ENCODE measurements at regions of chr10 and their contacts with region 1.

Region 1: GRCh38 chr10:124741281-124741921 is 2.8 kb downstream of the FAM53B start:
- DNase-seq: peak; percentile 64 to 88 (median 80)
- ATAC-seq: peak; percentile 55
- H3K4me3 ChIP-seq: peak overlapping the region; percentile 10 to 75
- H3K4me3 Mint-ChIP-seq: peak overlapping the region; percentile 97
- H3K27ac ChIP-seq: peak overlapping the region in 1 of 2 experiments; percentile 73
- H3K27ac Mint-ChIP-seq: peak overlapping the region; percentile 93
- H3K4me1 ChIP-seq: peaks cover 67% of the 10 kb centered on the region
- H3K4me1 Mint-ChIP-seq: peaks cover 75% of the 10 kb centered on the region
- H3K27me3 ChIP-seq: no peaks in the 10 kb centered on the region
- H3K27me3 Mint-ChIP-seq: no peaks in the 10 kb centered on the region
- CTCF ChIP-seq: peak; percentile 94

Region 2: DNA sequence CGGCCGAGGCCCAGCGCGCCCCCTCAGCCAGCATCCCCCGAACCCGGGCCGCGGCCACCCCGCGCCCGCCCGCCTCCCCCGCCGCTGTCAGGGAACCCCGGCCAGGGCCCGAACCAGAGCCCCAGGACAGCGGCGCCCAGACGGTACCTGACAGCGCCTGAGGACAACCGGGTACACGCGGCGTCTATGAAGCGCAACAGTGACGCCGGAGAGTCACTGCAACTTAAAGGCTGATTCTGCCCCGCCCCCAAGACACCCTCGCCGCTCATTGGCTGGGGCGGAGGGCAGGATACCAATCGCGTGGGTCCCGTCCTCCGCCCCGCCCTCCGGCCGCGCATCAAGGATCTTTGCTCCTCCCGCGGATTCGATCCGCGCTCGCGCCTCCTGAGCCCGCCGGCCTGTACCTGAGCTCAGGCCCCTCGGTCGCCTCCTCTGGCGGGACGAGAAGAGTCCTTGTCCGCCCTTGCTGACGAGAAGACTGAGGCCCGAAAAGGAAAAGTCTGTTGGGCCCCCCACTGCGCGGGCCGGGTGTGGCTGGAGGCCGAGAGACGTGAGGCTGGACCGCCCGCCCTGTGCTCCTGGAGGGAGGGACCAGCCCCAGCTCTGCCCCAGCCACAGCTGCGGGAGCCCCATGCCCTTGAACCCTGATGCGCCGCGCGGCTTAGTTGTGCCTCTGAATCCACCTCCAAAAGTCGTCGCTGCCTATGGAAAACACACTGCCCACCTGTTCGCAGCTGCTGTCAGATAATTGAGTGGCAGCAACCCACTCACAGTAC is 322.5 kb before region 1 on chr10 and contains the start of gene OAT:
- CTCF ChIA-PET with region 1: no interaction called
- POLR2A ChIA-PET with region 1: no interaction called
- intact Hi-C with region 1: loop called (anchors 1 to 5 kb)
- DNase-seq: peak; percentile 93 to 98 (median 97)
- ATAC-seq: peak; percentile 98
- H3K4me3 ChIP-seq: peak within 1 kb of the TSS; percentile 66 to 68
- H3K4me3 Mint-ChIP-seq: peak within 1 kb of the TSS; percentile 85
- H3K27ac ChIP-seq: peak within 1 kb of the TSS; percentile 70
- H3K27ac Mint-ChIP-seq: peak within 1 kb of the TSS; percentile 83
- H3K4me1 ChIP-seq: peaks cover 14% of the 10 kb centered on the region
- H3K4me1 Mint-ChIP-seq: peaks cover 25% of the 10 kb centered on the region
- H3K27me3 ChIP-seq: no peaks in the 10 kb centered on the region
- H3K27me3 Mint-ChIP-seq: peaks cover 7% of the 10 kb centered on the region
- CTCF ChIP-seq: no peak
- total RNA-seq, gene OAT: 49.8 to 56.1 TPM

Region 3: GRCh38 chr10:124493214-124493882 is 248.1 kb before region 1 on chr10:
- CTCF ChIA-PET with region 1: no interaction called
- POLR2A ChIA-PET with region 1: no interaction called
- intact Hi-C with region 1: no loop called
- DNase-seq: no peak
- ATAC-seq: no peak
- H3K4me3 ChIP-seq: no peak overlapping the region
- H3K4me3 Mint-ChIP-seq: no peak overlapping the region
- H3K27ac ChIP-seq: no peak overlapping the region
- H3K27ac Mint-ChIP-seq: no peak overlapping the region
- H3K4me1 ChIP-seq: peaks cover 6% of the 10 kb centered on the region
- H3K4me1 Mint-ChIP-seq: peaks cover 10% of the 10 kb centered on the region
- H3K27me3 ChIP-seq: no peaks in the 10 kb centered on the region
- H3K27me3 Mint-ChIP-seq: no peaks in the 10 kb centered on the region
- CTCF ChIP-seq: no peak

Region 4: GRCh38 chr10:124612611-124613498 is 128.5 kb before region 1 on chr10:
- CTCF ChIA-PET with region 1: interaction called, 7 read pairs
- POLR2A ChIA-PET with region 1: interaction called, 3 read pairs
- intact Hi-C with region 1: loop called in 1 of 2 experiments (anchors 5 kb)
- DNase-seq: peak in 5 of 9 experiments; percentile 27 to 73 (median 47)
- ATAC-seq: peak; percentile 48
- H3K4me3 ChIP-seq: no peak overlapping the region
- H3K4me3 Mint-ChIP-seq: peak overlapping the region; percentile 56
- H3K27ac ChIP-seq: peak overlapping the region; percentile 12 to 69
- H3K27ac Mint-ChIP-seq: peak overlapping the region; percentile 92
- H3K4me1 ChIP-seq: peaks cover 33% of the 10 kb centered on the region
- H3K4me1 Mint-ChIP-seq: peaks cover 39% of the 10 kb centered on the region
- H3K27me3 ChIP-seq: no peaks in the 10 kb centered on the region
- H3K27me3 Mint-ChIP-seq: no peaks in the 10 kb centered on the region
- CTCF ChIP-seq: no peak

Region 5: DNA sequence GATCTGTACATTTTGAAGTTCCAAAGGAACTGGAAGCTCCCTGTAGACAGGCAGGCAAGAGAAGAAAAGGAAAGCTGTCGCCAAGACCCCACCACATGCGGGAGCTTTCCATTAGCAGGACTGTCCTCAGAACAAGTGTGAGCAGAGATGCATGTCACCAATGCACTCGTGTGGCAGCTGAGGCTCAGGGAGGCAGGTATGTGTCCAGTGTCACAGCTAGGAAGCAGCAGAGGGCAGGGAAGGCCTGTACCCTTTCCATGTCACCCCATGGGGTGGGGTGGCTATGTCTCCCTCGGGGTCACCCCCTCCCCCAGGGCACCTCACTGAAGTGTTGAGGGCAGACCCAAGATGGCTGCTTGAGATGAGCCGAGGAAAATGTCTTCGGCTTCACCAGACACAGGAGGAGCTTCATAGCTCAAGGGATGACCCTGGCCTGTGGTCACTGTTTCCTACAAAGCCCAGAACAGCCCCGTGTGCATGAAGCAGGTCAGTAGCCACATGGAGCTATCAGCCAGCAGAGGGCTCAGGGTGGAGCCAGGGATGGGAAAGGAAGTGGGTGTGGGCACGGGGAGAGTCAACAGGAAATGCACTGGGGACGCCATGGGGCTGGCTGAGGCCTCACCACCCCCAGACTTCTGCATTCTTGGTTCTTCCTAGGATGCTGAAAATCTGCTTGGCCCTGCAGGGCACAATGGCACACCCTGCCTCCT is 93.8 kb before region 1 on chr10:
- CTCF ChIA-PET with region 1: interaction called, 74 read pairs
- POLR2A ChIA-PET with region 1: interaction called, 19 read pairs
- intact Hi-C with region 1: loop called (anchors 1 to 2 kb)
- DNase-seq: peak; percentile 44 to 90 (median 80)
- ATAC-seq: peak; percentile 54
- H3K4me3 ChIP-seq: peak overlapping the region; percentile 11 to 14
- H3K4me3 Mint-ChIP-seq: peak overlapping the region; percentile 74
- H3K27ac ChIP-seq: peak overlapping the region; percentile 65 to 93
- H3K27ac Mint-ChIP-seq: peak overlapping the region; percentile 94
- H3K4me1 ChIP-seq: peaks cover 84% of the 10 kb centered on the region
- H3K4me1 Mint-ChIP-seq: peaks cover 80% of the 10 kb centered on the region
- H3K27me3 ChIP-seq: no peaks in the 10 kb centered on the region
- H3K27me3 Mint-ChIP-seq: no peaks in the 10 kb centered on the region
- CTCF ChIP-seq: peak; percentile 30

Region 6: DNA sequence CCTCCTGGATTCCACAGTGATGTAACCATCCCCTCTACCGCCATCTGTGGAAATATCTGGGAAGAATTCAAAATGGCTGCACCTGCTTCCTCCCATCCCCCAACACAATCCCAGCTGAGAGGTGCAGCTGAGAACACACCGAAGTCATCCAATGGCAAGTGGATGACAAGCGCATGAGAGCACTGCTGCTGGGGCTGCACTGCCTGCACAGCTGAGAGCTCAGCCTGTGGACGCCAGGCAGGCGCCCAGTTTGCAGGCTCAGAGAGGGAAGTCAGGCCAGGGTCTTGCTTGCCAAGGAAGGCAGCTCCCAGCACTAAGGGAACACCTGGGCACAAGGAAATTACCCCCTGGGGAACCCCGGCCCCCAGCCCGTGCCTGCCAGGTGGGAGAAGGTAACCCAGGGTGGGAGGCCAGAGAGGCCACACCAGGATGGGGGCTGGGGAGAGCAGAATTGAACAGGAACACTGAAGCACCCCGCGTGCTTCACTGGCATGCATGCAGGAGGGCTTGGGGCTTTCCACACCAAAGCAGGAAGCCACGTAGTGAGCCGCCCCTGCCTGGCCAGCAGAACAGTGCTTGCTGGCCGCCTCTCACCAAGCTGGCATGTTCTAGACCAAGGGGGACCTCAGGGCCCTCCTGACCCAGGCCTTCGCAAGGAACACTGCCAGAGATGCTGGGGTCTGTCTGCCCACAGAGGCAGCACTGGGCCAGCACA is 43.4 kb before region 1 on chr10:
- CTCF ChIA-PET with region 1: interaction called, 23 read pairs
- POLR2A ChIA-PET with region 1: interaction called, 6 read pairs
- intact Hi-C with region 1: no loop called
- DNase-seq: peak in 6 of 9 experiments; percentile 20 to 84 (median 49)
- ATAC-seq: peak; percentile 37
- H3K4me3 ChIP-seq: no peak overlapping the region
- H3K4me3 Mint-ChIP-seq: peak overlapping the region; percentile 56
- H3K27ac ChIP-seq: peak overlapping the region; percentile 0 to 85
- H3K27ac Mint-ChIP-seq: peak overlapping the region; percentile 87
- H3K4me1 ChIP-seq: peaks cover 76% of the 10 kb centered on the region
- H3K4me1 Mint-ChIP-seq: peaks cover 91% of the 10 kb centered on the region
- H3K27me3 ChIP-seq: no peaks in the 10 kb centered on the region
- H3K27me3 Mint-ChIP-seq: no peaks in the 10 kb centered on the region
- CTCF ChIP-seq: no peak

Region 7: GRCh38 chr10:124802313-124802675 is 60.9 kb after region 1 on chr10:
- CTCF ChIA-PET with region 1: no interaction called
- POLR2A ChIA-PET with region 1: no interaction called
- intact Hi-C with region 1: loop called (anchors 2 kb)
- DNase-seq: peak in 3 of 9 experiments; percentile 5 to 38 (median 19)
- ATAC-seq: no peak
- H3K4me3 ChIP-seq: peak overlapping the region; percentile 73 to 90
- H3K4me3 Mint-ChIP-seq: peak overlapping the region; percentile 94
- H3K27ac ChIP-seq: peak overlapping the region; percentile 36 to 76
- H3K27ac Mint-ChIP-seq: peak overlapping the region; percentile 91
- H3K4me1 ChIP-seq: peaks cover 12% of the 10 kb centered on the region
- H3K4me1 Mint-ChIP-seq: peaks cover 25% of the 10 kb centered on the region
- H3K27me3 ChIP-seq: no peaks in the 10 kb centered on the region
- H3K27me3 Mint-ChIP-seq: peaks cover 2% of the 10 kb centered on the region
- CTCF ChIP-seq: no peak